B cell (primary cell): ENCODE measurements at regions of chr2 and their contacts with region 1.

Region 1: GRCh38 chr2:157327621-157328500 is 2.2 kb upstream of the ERMN start:
- DNase-seq: peak; percentile 88
- ATAC-seq: peak; percentile 98
- H3K4me3 ChIP-seq: peak overlapping the region in 1 of 5 experiments; percentile 2
- H3K4me3 Mint-ChIP-seq: peak overlapping the region; percentile 71
- H3K27ac ChIP-seq: no peak overlapping the region
- H3K27ac Mint-ChIP-seq: peak overlapping the region; percentile 60
- H3K4me1 ChIP-seq: peaks cover 9 to 10% of the 10 kb centered on the region in 2 donors
- H3K4me1 Mint-ChIP-seq: peaks cover 14% of the 10 kb centered on the region
- H3K27me3 ChIP-seq: no peaks in the 10 kb centered on the region
- H3K27me3 Mint-ChIP-seq: no peaks in the 10 kb centered on the region
- CTCF ChIP-seq: peak; percentile 97

Region 2: DNA sequence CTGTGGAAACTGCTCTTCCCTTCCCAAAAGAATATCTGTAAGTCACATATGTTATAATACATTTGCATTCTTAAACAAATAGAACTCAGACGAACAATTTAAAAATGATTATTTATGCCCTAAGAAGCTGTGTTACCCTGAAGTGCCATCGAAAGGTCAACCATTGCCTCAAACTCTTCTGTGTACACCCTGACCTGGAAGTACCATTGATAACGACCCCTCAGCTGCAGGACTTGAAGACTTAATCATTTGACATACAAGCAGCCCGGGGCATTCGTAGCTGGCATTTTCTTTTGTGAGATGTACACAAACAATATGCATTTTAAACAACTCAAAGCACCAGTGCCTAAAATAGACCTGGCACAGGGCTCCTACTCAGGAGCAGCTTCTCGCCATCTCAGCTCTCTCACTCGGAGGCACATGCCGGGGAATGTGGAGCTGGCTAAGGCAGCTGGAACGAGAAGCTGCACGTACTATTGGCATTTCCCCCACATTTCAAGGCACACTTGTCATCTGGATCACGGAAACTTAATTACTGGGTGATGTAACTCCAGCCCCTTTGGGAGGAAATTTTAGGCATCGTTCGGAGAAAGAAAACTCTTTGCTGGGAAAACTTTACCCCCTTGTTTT is 240.4 kb before region 1 on chr2:
- CTCF ChIA-PET with region 1: no interaction called
- POLR2A ChIA-PET with region 1: no interaction called
- intact Hi-C with region 1: no loop called
- DNase-seq: no peak
- ATAC-seq: no peak
- H3K4me3 ChIP-seq: no peak overlapping the region
- H3K4me3 Mint-ChIP-seq: no peak overlapping the region
- H3K27ac ChIP-seq: no peak overlapping the region
- H3K27ac Mint-ChIP-seq: no peak overlapping the region
- H3K4me1 ChIP-seq: no peaks in the 10 kb centered on the region
- H3K4me1 Mint-ChIP-seq: no peaks in the 10 kb centered on the region
- H3K27me3 ChIP-seq: no peaks in the 10 kb centered on the region
- H3K27me3 Mint-ChIP-seq: no peaks in the 10 kb centered on the region
- CTCF ChIP-seq: no peak

Region 3: DNA sequence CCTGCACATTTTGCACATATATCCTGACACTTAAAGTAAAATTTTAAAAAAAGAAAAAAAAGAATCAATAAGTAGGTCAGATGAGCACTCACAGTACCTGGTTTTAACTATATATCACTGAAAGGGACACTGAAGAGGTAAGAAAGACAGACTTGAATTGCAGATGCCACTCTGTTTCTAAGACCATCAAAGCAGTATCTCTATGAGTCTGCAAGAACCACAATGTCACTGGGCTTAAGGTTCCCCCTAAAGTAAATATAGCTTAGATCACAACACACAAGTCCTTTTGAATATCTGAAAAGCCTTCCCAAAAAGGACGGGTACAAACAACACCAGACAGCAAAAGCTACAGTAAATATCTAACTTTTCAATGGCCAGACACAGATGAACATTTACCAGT is 58.4 kb after region 1 on chr2:
- CTCF ChIA-PET with region 1: interaction called, 11 read pairs
- POLR2A ChIA-PET with region 1: no interaction called
- intact Hi-C with region 1: no loop called
- DNase-seq: no peak
- ATAC-seq: no peak
- H3K4me3 ChIP-seq: no peak overlapping the region
- H3K4me3 Mint-ChIP-seq: no peak overlapping the region
- H3K27ac ChIP-seq: peak overlapping the region in 1 of 2 donors; percentile 47
- H3K27ac Mint-ChIP-seq: peak overlapping the region; percentile 38
- H3K4me1 ChIP-seq: peaks cover 0 to 9% of the 10 kb centered on the region in 2 donors
- H3K4me1 Mint-ChIP-seq: peaks cover 31% of the 10 kb centered on the region
- H3K27me3 ChIP-seq: no peaks in the 10 kb centered on the region
- H3K27me3 Mint-ChIP-seq: no peaks in the 10 kb centered on the region
- CTCF ChIP-seq: no peak

Region 4: DNA sequence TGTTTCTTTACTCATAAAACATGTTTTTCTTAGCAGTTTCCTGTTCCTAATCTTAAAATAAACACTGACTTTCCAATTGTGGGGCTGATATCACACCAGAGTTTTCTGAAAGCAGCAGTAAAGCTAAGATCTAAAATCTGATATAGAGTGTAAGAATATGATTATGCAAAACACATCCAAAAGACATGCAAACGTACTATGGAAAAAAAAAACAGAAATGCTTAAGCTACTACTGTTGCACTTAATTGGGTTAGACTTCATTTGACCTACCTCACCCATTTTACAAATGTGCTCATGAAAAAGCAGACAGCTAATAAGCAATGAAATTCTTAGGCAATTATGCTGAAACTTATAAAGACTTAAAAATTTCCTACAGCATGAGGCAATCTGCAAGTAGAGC is 105.5 kb after region 1 on chr2:
- CTCF ChIA-PET with region 1: interaction called, 52 read pairs
- POLR2A ChIA-PET with region 1: interaction called, 4 read pairs
- intact Hi-C with region 1: no loop called
- DNase-seq: no peak
- ATAC-seq: no peak
- H3K4me3 ChIP-seq: no peak overlapping the region
- H3K4me3 Mint-ChIP-seq: peak overlapping the region; percentile 68
- H3K27ac ChIP-seq: peak overlapping the region in 1 of 2 donors; percentile 34
- H3K27ac Mint-ChIP-seq: peak overlapping the region; percentile 39
- H3K4me1 ChIP-seq: peaks cover 65 to 73% of the 10 kb centered on the region in 2 donors
- H3K4me1 Mint-ChIP-seq: peaks cover 82% of the 10 kb centered on the region
- H3K27me3 ChIP-seq: no peaks in the 10 kb centered on the region
- H3K27me3 Mint-ChIP-seq: no peaks in the 10 kb centered on the region
- CTCF ChIP-seq: no peak

Region 5: GRCh38 chr2:157480182-157480961 is 152.5 kb after region 1 on chr2:
- CTCF ChIA-PET with region 1: interaction called, 15 read pairs
- POLR2A ChIA-PET with region 1: no interaction called
- intact Hi-C with region 1: no loop called
- DNase-seq: no peak
- ATAC-seq: no peak
- H3K4me3 ChIP-seq: no peak overlapping the region
- H3K4me3 Mint-ChIP-seq: no peak overlapping the region
- H3K27ac ChIP-seq: no peak overlapping the region
- H3K27ac Mint-ChIP-seq: peak overlapping the region; percentile 8
- H3K4me1 ChIP-seq: peaks cover 4 to 14% of the 10 kb centered on the region in 2 donors
- H3K4me1 Mint-ChIP-seq: peaks cover 25% of the 10 kb centered on the region
- H3K27me3 ChIP-seq: no peaks in the 10 kb centered on the region
- H3K27me3 Mint-ChIP-seq: no peaks in the 10 kb centered on the region
- CTCF ChIP-seq: no peak

Region 6: DNA sequence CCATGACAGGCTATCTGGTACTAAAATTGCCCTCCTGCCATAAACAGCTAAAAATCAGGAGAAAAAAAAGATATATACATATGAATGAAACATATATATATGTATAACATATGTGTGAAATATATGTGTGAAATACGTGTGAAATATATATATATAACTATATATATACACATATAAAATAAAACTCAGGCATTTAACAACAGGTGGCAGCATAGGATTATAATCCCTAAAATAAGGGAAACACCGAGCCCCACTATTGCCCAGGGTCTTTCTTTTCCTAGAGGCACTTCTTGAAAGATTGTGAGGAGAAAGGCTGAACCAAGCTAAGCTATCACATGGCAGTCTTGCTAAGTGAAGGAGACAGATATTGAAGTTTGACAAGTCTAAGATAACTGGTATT is 181.9 kb after region 1 on chr2:
- CTCF ChIA-PET with region 1: interaction called, 10 read pairs
- POLR2A ChIA-PET with region 1: no interaction called
- intact Hi-C with region 1: no loop called
- DNase-seq: no peak
- ATAC-seq: no peak
- H3K4me3 ChIP-seq: no peak overlapping the region
- H3K4me3 Mint-ChIP-seq: no peak overlapping the region
- H3K27ac ChIP-seq: no peak overlapping the region
- H3K27ac Mint-ChIP-seq: no peak overlapping the region
- H3K4me1 ChIP-seq: peaks cover 4 to 6% of the 10 kb centered on the region in 2 donors
- H3K4me1 Mint-ChIP-seq: peaks cover 5% of the 10 kb centered on the region
- H3K27me3 ChIP-seq: peaks cover 0 to 3% (median 0%) of the 10 kb centered on the region in 4 experiments
- H3K27me3 Mint-ChIP-seq: peaks cover 6% of the 10 kb centered on the region
- CTCF ChIP-seq: no peak

Region 7: GRCh38 chr2:157876066-157876787 is 548.4 kb after region 1 on chr2 and contains the start of gene ACVR1:
- CTCF ChIA-PET with region 1: no interaction called
- POLR2A ChIA-PET with region 1: no interaction called
- intact Hi-C with region 1: loop called (anchors 10 kb)
- DNase-seq: peak; percentile 85
- ATAC-seq: peak; percentile 77
- H3K4me3 ChIP-seq: peak within 1 kb of the TSS; percentile 56 to 81 (median 75)
- H3K4me3 Mint-ChIP-seq: peak within 1 kb of the TSS; percentile 95
- H3K27ac ChIP-seq: peak within 1 kb of the TSS; percentile 30 to 68
- H3K27ac Mint-ChIP-seq: peak within 1 kb of the TSS; percentile 91
- H3K4me1 ChIP-seq: peaks cover 14 to 20% of the 10 kb centered on the region in 2 donors
- H3K4me1 Mint-ChIP-seq: peaks cover 24% of the 10 kb centered on the region
- H3K27me3 ChIP-seq: no peaks in the 10 kb centered on the region
- H3K27me3 Mint-ChIP-seq: no peaks in the 10 kb centered on the region
- CTCF ChIP-seq: peak; percentile 45
- total RNA-seq, gene ACVR1: 11.3 and 11.7 TPM in 2 replicates